Panc1 (cell line): ENCODE measurements at regions of chr18 and their contacts with region 1.

Region 1: GRCh38 chr18:50967714-50968661 is at the start of gene ELAC1:
- DNase-seq: no peak
- ATAC-seq: peak; percentile 99
- H3K4me3 ChIP-seq: peak within 1 kb of the TSS; percentile 76 to 84
- H3K27ac ChIP-seq: peak within 1 kb of the TSS; percentile 91
- H3K4me1 ChIP-seq: peaks cover 18% of the 10 kb centered on the region
- H3K27me3 ChIP-seq: no peaks in the 10 kb centered on the region
- CTCF ChIP-seq: no peak
- total RNA-seq, gene ELAC1: 4.6 TPM

Region 2: DNA sequence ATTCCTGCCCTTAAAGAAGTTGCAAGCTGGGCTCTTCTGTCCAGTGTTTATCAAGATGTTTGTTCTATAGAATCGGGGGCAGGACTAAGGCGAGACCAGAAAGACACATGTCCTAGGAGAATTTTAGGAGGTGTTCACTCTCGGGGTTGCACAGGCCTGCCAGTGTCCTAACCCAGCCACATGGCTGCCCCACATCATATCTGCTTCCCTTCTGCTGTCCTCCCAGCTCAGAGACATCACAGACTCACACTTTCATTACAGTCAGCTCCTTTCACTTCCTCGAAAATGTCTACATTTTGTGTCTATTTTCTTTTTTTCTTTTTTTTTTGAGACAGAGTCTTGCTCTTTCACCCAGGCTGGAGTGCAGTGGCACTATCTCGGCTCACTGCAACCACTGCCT is 137.4 kb before region 1 on chr18:
- CTCF ChIA-PET with region 1: no interaction called
- POLR2A ChIA-PET with region 1: interaction called, 19 read pairs
- in situ Hi-C with region 1: no loop called
- intact Hi-C with region 1: no loop called
- DNase-seq: no peak
- ATAC-seq: no peak
- H3K4me3 ChIP-seq: no peak overlapping the region
- H3K27ac ChIP-seq: no peak overlapping the region
- H3K4me1 ChIP-seq: no peaks in the 10 kb centered on the region
- H3K27me3 ChIP-seq: no peaks in the 10 kb centered on the region
- CTCF ChIP-seq: no peak

Region 3: GRCh38 chr18:50986360-50987087 is 18.5 kb after region 1 on chr18:
- CTCF ChIA-PET with region 1: no interaction called
- POLR2A ChIA-PET with region 1: no interaction called
- in situ Hi-C with region 1: no loop called
- intact Hi-C with region 1: no loop called
- DNase-seq: no peak
- ATAC-seq: no peak
- H3K4me3 ChIP-seq: no peak overlapping the region
- H3K27ac ChIP-seq: no peak overlapping the region
- H3K4me1 ChIP-seq: no peaks in the 10 kb centered on the region
- H3K27me3 ChIP-seq: no peaks in the 10 kb centered on the region
- CTCF ChIP-seq: no peak

Region 4: DNA sequence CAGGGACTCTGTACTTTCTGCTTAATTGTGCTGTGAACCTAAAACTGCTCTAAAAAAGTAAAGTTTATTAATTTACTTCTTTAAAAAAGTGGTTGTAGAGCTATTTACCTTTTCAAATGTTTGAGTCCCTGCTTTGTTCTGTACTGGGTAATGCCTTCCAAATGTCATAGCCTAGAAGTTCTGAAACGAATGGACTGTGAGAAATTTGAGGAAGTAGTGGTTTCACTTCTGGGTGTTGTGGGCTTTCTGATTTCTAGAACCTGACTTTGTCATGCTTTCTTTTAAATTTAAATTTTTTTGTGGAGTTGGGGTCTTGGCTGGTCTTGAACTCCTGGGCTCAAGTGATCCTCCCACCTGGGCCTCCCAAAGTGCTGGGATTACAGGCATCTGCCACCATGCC is 106.6 kb after region 1 on chr18:
- CTCF ChIA-PET with region 1: no interaction called
- POLR2A ChIA-PET with region 1: interaction called, 12 read pairs
- in situ Hi-C with region 1: no loop called
- intact Hi-C with region 1: no loop called
- DNase-seq: no peak
- ATAC-seq: no peak
- H3K4me3 ChIP-seq: no peak overlapping the region
- H3K27ac ChIP-seq: no peak overlapping the region
- H3K4me1 ChIP-seq: no peaks in the 10 kb centered on the region
- H3K27me3 ChIP-seq: no peaks in the 10 kb centered on the region
- CTCF ChIP-seq: no peak